ENCODE measurements at regions of chr7 and their contacts with region 1.

Region 1: DNA sequence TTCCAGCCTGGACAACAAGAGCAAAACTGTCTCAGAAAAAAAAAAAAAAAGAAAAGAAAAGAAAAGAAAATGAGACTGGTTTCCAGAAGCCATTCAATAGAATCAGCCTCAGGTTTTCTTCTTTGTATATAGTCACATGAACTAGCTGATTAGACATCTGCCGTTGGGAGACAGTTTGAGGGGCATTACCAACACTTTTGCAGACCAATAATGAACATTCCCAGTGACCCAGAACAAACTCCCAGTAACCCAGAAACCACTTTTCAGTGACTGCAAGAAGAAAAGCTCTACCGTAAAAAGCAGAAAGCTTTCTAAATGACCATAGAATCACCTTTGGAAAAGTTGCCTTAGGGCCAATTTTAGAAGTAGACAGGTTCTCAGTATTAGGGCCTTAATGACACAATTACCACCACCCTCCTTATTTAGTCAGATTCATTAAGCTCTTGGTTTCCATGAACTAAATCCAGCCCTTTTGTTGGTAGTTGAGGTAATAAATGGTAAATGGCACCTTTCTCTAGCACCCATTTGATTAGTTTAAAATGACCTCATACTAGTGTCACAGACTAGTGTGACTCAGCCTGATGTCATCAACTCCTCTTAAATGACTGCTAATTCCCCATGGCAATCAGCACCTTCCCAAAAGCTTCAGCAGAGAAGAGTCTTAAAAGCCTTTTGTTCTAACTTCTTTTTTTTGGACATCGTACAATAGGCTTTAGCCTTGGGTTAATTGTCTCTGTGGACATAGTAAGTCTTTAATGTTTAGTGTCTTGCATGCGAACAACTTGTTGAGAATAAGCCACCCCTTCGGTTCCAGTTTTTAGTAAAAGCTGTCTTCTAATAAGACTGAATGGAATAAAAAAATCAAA is 33.6 kb upstream of the XRCC2 start:
- DNase-seq: no peak
- H3K4me3 ChIP-seq: no peak overlapping the region
- H3K4me3 Mint-ChIP-seq: no peak overlapping the region
- H3K27ac ChIP-seq: no peak overlapping the region
- H3K27ac Mint-ChIP-seq: no peak overlapping the region
- H3K4me1 ChIP-seq: no peaks in the 10 kb centered on the region
- H3K4me1 Mint-ChIP-seq: peaks cover 3 to 4% (median 4%) of the 10 kb centered on the region in 3 donors
- H3K27me3 ChIP-seq: no peaks in the 10 kb centered on the region
- H3K27me3 Mint-ChIP-seq: peaks cover 2 to 9% of the 10 kb centered on the region in 2 donors

Region 2: GRCh38 chr7:152336754-152337368 is 372.7 kb before region 1 on chr7:
- CTCF ChIA-PET with region 1: interaction called, 13 read pairs
- POLR2A ChIA-PET with region 1: no interaction called
- DNase-seq: peak in 3 of 5 donors; percentile 6 to 37 (median 11)
- H3K4me3 ChIP-seq: no peak overlapping the region
- H3K4me3 Mint-ChIP-seq: peak overlapping the region; percentile 63 to 86 (median 79)
- H3K27ac ChIP-seq: no peak overlapping the region
- H3K27ac Mint-ChIP-seq: peak overlapping the region; percentile 23 to 94 (median 79)
- H3K4me1 ChIP-seq: peaks cover 25% of the 10 kb centered on the region
- H3K4me1 Mint-ChIP-seq: peaks cover 47 to 75% (median 73%) of the 10 kb centered on the region in 3 donors
- H3K27me3 ChIP-seq: no peaks in the 10 kb centered on the region
- H3K27me3 Mint-ChIP-seq: no peaks in the 10 kb centered on the region

Region 3: GRCh38 chr7:152564656-152565250 is 144.8 kb before region 1 on chr7:
- CTCF ChIA-PET with region 1: no interaction called
- POLR2A ChIA-PET with region 1: no interaction called
- DNase-seq: no peak
- H3K4me3 ChIP-seq: no peak overlapping the region
- H3K4me3 Mint-ChIP-seq: peak overlapping the region in 2 of 7 donors; percentile 19 to 51
- H3K27ac ChIP-seq: no peak overlapping the region
- H3K27ac Mint-ChIP-seq: no peak overlapping the region
- H3K4me1 ChIP-seq: no peaks in the 10 kb centered on the region
- H3K4me1 Mint-ChIP-seq: peaks cover 12 to 15% (median 12%) of the 10 kb centered on the region in 3 donors
- H3K27me3 ChIP-seq: no peaks in the 10 kb centered on the region
- H3K27me3 Mint-ChIP-seq: peaks cover 0 to 4% of the 10 kb centered on the region in 2 donors

Region 4: GRCh38 chr7:152723364-152723763 is 13.8 kb after region 1 on chr7:
- CTCF ChIA-PET with region 1: no interaction called
- POLR2A ChIA-PET with region 1: no interaction called
- DNase-seq: no peak
- H3K4me3 ChIP-seq: no peak overlapping the region
- H3K4me3 Mint-ChIP-seq: no peak overlapping the region
- H3K27ac ChIP-seq: no peak overlapping the region
- H3K27ac Mint-ChIP-seq: no peak overlapping the region
- H3K4me1 ChIP-seq: no peaks in the 10 kb centered on the region
- H3K4me1 Mint-ChIP-seq: no peaks in the 10 kb centered on the region
- H3K27me3 ChIP-seq: no peaks in the 10 kb centered on the region
- H3K27me3 Mint-ChIP-seq: peaks cover 2 to 18% of the 10 kb centered on the region in 2 donors

Region 5: GRCh38 chr7:152850420-152850819 is 140.9 kb after region 1 on chr7:
- CTCF ChIA-PET with region 1: no interaction called
- POLR2A ChIA-PET with region 1: no interaction called
- DNase-seq: no peak
- H3K4me3 ChIP-seq: no peak overlapping the region
- H3K4me3 Mint-ChIP-seq: no peak overlapping the region
- H3K27ac ChIP-seq: no peak overlapping the region
- H3K27ac Mint-ChIP-seq: peak overlapping the region in 4 of 8 donors; percentile 25 to 64 (median 44)
- H3K4me1 ChIP-seq: no peaks in the 10 kb centered on the region
- H3K4me1 Mint-ChIP-seq: no peaks in the 10 kb centered on the region
- H3K27me3 ChIP-seq: no peaks in the 10 kb centered on the region
- H3K27me3 Mint-ChIP-seq: no peaks in the 10 kb centered on the region

Measured in CD8-positive, alpha-beta memory T cell (primary cell).